ENCODE measurements at regions of chr1 and their contacts with region 1.

Region 1: DNA sequence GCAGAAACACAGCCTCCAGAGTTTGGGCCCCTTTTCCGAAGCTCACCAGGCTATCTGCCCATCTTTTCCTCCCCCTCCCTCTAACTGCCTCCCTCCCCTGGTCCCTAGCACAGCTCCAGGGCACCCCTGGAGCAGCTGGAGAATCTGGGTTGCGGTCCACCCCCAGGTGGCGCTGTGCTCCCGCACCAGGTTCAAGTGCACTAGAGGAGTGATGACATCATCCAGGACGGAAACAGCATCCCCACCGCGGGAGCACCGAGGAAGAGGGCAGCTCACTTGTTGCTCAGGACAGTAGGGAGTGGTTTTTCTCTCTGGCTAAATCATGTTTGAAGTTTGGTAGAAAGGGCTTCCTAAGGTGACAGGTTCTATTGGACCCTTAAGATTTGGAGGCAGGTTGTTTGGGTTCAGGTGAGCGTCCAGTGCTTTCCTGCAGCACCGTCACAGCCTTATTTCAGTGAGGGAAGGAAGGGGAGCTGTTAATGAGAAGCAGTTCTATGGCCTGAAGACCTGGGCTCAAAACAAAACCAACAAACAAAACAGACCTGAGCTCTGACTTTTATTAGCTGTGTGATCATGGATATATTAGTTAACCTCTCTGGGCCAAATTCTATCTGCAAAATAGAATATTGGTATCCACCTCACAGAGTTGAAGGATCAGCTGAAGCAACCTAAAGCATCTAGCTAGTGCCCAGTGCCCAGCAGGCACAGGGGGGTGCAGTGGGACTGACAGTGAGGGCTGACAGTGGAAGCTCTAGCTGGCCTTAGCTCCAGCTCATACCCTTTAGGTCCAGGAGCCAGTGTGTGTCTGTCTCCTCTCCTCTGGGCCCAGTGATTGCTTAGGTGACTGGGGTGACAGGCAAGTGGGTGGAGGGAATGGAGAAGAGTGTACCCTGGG is 7.5 kb downstream of the SHISA4 start:
- DNase-seq: peak; percentile 85
- H3K4me3 ChIP-seq: no peak overlapping the region
- H3K27ac ChIP-seq: no peak overlapping the region
- H3K4me1 ChIP-seq: peaks cover 4% of the 10 kb centered on the region
- H3K27me3 ChIP-seq: no peaks in the 10 kb centered on the region
- CTCF ChIP-seq: peak; percentile 94 to 96
- POLR2A ChIP-seq: no peak

Region 2: DNA sequence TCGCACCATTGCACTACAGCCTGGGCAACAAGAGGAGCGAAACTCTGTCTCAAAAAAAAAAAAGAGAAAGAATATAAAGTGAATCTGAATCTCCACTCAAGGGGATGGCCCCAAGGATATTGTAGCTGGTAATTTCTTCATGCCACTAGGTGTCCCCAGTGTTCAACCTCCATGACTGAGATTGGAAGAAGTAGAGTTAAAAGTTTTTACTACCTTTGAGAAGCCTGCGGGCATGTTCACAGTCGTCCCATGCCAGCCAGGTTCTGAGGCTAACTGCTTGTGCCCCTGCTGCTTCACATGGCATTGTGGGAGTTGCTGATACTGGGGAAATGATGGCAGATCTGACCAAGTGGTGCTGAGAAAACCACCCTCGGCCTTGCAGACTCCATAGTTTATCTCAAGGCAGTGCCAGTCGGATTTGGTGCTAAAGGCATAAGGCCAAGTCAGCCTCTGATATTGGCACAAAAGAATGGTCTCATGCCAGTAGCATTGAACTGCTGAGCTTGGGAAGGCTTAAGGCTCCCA is 18.2 kb before region 1 on chr1:
- CTCF ChIA-PET with region 1: interaction called, 49 read pairs
- POLR2A ChIA-PET with region 1: no interaction called
- dilution Hi-C with region 1: no loop called
- intact Hi-C with region 1: no loop called
- DNase-seq: peak; percentile 64
- H3K4me3 ChIP-seq: no peak overlapping the region
- H3K27ac ChIP-seq: no peak overlapping the region
- H3K4me1 ChIP-seq: no peaks in the 10 kb centered on the region
- H3K27me3 ChIP-seq: no peaks in the 10 kb centered on the region
- CTCF ChIP-seq: peak; percentile 53 to 67
- POLR2A ChIP-seq: no peak

Region 3: DNA sequence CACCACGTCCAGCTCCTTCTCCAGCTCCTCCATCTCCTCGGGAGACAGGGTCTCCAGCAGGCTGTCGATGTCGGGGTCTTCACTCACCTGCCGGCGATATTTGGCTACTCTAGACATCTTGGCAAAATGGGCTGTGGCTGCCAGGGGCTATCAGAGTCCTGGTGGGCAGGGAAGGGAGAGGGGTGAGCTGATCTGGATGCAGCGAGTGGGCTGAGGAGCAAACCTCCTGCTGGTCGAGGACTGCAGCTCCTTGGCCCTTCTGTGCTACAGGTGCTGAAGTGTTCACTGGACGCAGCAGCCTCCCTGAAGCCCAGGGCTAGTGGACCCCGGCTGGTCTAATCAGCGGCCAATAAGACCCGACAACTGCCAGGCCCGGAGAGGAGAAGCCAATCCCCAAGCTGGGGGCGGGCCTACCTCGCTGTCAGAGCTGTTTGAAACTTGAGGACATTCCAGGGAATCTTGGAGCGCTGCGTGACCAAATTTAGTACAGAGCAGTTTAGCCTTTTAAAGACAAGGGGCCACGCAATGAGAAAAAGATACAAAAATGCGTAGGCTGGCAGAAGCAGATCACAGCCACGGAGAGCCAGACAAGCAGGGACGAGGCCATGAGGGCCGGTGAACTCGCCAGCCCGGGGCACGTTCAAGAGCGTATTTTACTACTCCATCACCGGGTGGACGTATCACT is 50.2 kb after region 1 on chr1 and contains the start of gene LMOD1:
- CTCF ChIA-PET with region 1: interaction called, 31 read pairs
- POLR2A ChIA-PET with region 1: no interaction called
- dilution Hi-C with region 1: no loop called
- intact Hi-C with region 1: loop called (anchors 2 kb)
- DNase-seq: peak; percentile 83
- H3K4me3 ChIP-seq: peak within 1 kb of the TSS in 1 of 3 experiments; percentile 25
- H3K27ac ChIP-seq: no peak within 1 kb of the TSS
- H3K4me1 ChIP-seq: peaks cover 9% of the 10 kb centered on the region
- H3K27me3 ChIP-seq: peaks cover 11 to 13% of the 10 kb centered on the region in 2 experiments
- CTCF ChIP-seq: no peak
- POLR2A ChIP-seq: no peak
- total RNA-seq, gene LMOD1: 0.12 and 0.33 TPM in 2 replicates

Region 4: DNA sequence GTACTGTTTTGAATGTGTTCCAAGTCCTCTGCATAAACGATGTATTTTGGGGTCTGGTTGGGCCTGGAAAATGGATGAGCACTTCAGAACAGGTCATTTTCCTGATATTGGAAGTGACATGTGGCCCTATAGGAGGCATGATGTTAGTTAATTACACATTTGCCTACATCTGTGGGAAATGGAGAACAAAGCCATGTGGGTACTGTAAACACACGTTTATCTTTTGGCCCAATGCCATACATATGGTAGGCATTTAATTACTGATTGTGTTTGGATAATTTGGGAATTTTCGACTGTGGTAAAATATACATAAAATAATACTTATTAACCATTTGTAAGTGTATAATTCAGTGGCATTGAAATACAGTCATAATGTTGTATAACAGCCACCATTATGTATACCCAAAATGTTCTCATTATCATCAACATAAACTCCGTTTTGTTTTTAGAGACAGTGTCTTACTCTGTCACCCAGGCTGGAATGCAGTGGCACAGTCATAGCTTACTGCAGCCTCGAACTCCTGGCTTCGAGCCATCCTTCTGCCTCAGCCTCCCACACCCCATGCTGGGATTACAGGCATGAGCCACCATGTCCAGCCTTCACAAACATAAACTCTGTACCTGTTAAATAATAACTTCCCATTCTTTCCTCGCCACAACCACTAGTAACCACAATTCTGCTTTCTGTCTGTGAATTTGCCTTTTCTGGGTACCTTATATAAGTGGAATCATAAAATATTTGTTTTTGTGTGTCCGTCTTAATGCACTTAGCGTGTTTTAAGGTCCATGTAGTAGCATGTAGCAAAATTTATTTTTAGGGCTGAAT is 74.4 kb after region 1 on chr1:
- CTCF ChIA-PET with region 1: interaction called, 577 read pairs
- POLR2A ChIA-PET with region 1: interaction called, 6 read pairs
- dilution Hi-C with region 1: no loop called
- intact Hi-C with region 1: loop called (anchors 1 kb)
- DNase-seq: peak; percentile 27
- H3K4me3 ChIP-seq: no peak overlapping the region
- H3K27ac ChIP-seq: no peak overlapping the region
- H3K4me1 ChIP-seq: no peaks in the 10 kb centered on the region
- H3K27me3 ChIP-seq: no peaks in the 10 kb centered on the region
- CTCF ChIP-seq: no peak
- POLR2A ChIP-seq: no peak

Region 5: DNA sequence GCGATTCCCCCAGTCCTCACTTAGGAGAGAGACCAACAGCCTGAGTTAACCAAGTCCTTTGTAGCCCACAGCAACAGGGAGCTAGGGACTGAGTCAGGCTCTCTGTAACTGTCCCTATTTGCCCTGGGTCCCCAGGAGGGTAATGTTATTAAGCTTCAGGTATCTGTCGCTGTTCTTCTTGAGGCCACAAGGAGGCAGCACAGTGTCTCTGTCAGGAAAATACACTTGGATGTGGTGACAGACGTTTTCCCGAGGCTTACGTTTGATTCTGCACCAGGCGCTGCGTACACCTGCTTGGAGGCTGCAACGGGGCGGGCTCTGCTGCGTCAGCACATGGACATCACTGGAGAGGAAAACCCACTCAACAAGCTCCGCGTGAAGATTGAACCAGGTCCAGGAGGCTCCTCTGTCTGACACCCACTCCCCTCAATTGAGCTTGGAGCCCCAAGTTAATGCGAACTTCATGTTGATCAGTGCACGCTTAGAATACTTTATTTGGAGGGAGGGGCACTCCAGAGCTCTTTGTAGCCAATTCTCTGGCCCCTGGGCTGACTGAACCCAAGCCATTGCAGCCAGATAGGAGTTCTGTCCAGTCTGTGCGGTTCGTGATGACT is 103.6 kb after region 1 on chr1:
- CTCF ChIA-PET with region 1: interaction called, 29 read pairs
- POLR2A ChIA-PET with region 1: no interaction called
- dilution Hi-C with region 1: no loop called
- intact Hi-C with region 1: loop called (anchors 1 kb)
- DNase-seq: peak; percentile 39
- H3K4me3 ChIP-seq: no peak overlapping the region
- H3K27ac ChIP-seq: no peak overlapping the region
- H3K4me1 ChIP-seq: no peaks in the 10 kb centered on the region
- H3K27me3 ChIP-seq: no peaks in the 10 kb centered on the region
- CTCF ChIP-seq: peak; percentile 74 to 81
- POLR2A ChIP-seq: no peak

Measured in endothelial cell of umbilical vein (primary cell).